ENCODE measurements at regions of chr17 and their contacts with region 1.

Region 1: GRCh38 chr17:60677308-60678124 is at the start of gene BCAS3:
- DNase-seq: peak; percentile 99
- H3K4me3 Mint-ChIP-seq: peak within 1 kb of the TSS; percentile 91
- H3K27ac Mint-ChIP-seq: peak within 1 kb of the TSS; percentile 79
- H3K4me1 Mint-ChIP-seq: peaks cover 11% of the 10 kb centered on the region
- H3K27me3 Mint-ChIP-seq: no peaks in the 10 kb centered on the region
- total RNA-seq, gene BCAS3: 7.2 to 7.5 TPM

Region 2: GRCh38 chr17:60135151-60135950 is 542.2 kb before region 1 on chr17:
- CTCF ChIA-PET with region 1: no interaction called
- intact Hi-C with region 1: loop called (anchors 10 kb)
- DNase-seq: peak; percentile 90
- H3K4me3 Mint-ChIP-seq: peak overlapping the region; percentile 85
- H3K27ac Mint-ChIP-seq: no peak overlapping the region
- H3K4me1 Mint-ChIP-seq: peaks cover 23% of the 10 kb centered on the region
- H3K27me3 Mint-ChIP-seq: peaks cover 29% of the 10 kb centered on the region

Region 3: DNA sequence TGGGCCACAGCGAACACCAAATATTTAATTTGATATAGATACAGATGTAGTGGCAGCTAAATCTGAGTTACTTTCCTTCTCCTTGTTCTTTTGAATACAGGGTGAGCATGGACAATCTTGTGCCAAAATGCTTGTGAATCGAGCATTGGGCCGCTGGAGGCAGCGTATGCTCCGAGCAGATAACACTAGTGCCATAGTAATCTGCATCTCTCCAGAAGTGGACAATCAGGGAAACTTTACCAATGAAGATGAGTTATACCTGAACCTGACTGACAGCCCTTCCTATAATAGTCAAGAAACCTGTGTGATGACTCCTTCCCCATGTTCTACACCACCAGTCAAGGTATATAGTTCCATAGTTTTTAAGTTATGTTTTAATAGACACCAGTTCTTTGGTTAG is 21.0 kb before region 1 on chr17:
- CTCF ChIA-PET with region 1: no interaction called
- intact Hi-C with region 1: no loop called
- DNase-seq: no peak
- H3K4me3 Mint-ChIP-seq: no peak overlapping the region
- H3K27ac Mint-ChIP-seq: no peak overlapping the region
- H3K4me1 Mint-ChIP-seq: peaks cover 26% of the 10 kb centered on the region
- H3K27me3 Mint-ChIP-seq: no peaks in the 10 kb centered on the region